ENCODE measurements at regions of chr11 and their contacts with region 1.

Region 1: GRCh38 chr11:111047374-111047773 is 198.2 kb upstream of the POU2AF2 start:
- DNase-seq: no peak
- H3K4me3 ChIP-seq: no peak overlapping the region
- H3K27ac ChIP-seq: no peak overlapping the region
- H3K4me1 ChIP-seq: peaks cover 0 to 19% (median 15%) of the 10 kb centered on the region in 4 donors
- H3K27me3 ChIP-seq: no peaks in the 10 kb centered on the region
- CTCF ChIP-seq: no peak
- EP300 ChIP-seq: no peak
- POLR2A ChIP-seq: no peak

Region 2: GRCh38 chr11:111063726-111064517 is 16.5 kb after region 1 on chr11:
- intact Hi-C with region 1: loop called (anchors 1 kb)
- DNase-seq: no peak
- H3K4me3 ChIP-seq: no peak overlapping the region
- H3K27ac ChIP-seq: peak overlapping the region in 2 of 4 donors; percentile 13 to 49
- H3K4me1 ChIP-seq: peaks cover 0 to 20% (median 16%) of the 10 kb centered on the region in 4 donors
- H3K27me3 ChIP-seq: no peaks in the 10 kb centered on the region
- CTCF ChIP-seq: no peak
- EP300 ChIP-seq: no peak
- POLR2A ChIP-seq: no peak

Region 3: GRCh38 chr11:111148953-111149352 is 101.6 kb after region 1 on chr11:
- intact Hi-C with region 1: no loop called
- DNase-seq: no peak
- H3K4me3 ChIP-seq: no peak overlapping the region
- H3K27ac ChIP-seq: no peak overlapping the region
- H3K4me1 ChIP-seq: no peaks in the 10 kb centered on the region
- H3K27me3 ChIP-seq: no peaks in the 10 kb centered on the region
- CTCF ChIP-seq: no peak
- EP300 ChIP-seq: no peak
- POLR2A ChIP-seq: no peak

Measured in esophagus muscularis mucosa (tissue), 4 donors.